ENCODE measurements at regions of chr12 and their contacts with region 1.

Region 1: GRCh38 chr12:122399592-122400373 is 22.7 kb downstream of the CLIP1 start:
- ATAC-seq: peak; percentile 63 to 77 (median 70)
- H3K4me3 ChIP-seq: no peak overlapping the region
- H3K27ac ChIP-seq: peak overlapping the region; percentile 75 to 80
- H3K4me1 ChIP-seq: peaks cover 15 to 16% of the 10 kb centered on the region in 2 donors

Region 2: GRCh38 chr12:122471324-122472226 is 71.8 kb after region 1 on chr12:
- in situ Hi-C with region 1: loop called in 1 of 9 experiments (anchors 10 kb)
- ATAC-seq: peak in 4 of 8 experiments; percentile 39 to 74 (median 64)
- H3K4me3 ChIP-seq: no peak overlapping the region
- H3K27ac ChIP-seq: no peak overlapping the region
- H3K4me1 ChIP-seq: no peaks in the 10 kb centered on the region

Measured in motor neuron (in vitro differentiated cells).